Lower leg skin (tissue), 4 donors: ENCODE measurements at regions of chr4 and their contacts with region 1.

Region 1: GRCh38 chr4:73653695-73654106 is 33.5 kb upstream of the RASSF6 start:
- DNase-seq: no peak
- H3K4me3 ChIP-seq: no peak overlapping the region
- CTCF ChIP-seq: no peak
- POLR2A ChIP-seq: no peak

Region 2: GRCh38 chr4:73069338-73070073 is 584.2 kb before region 1 on chr4 and contains the start of gene COX18:
- intact Hi-C with region 1: no loop called
- DNase-seq: peak; percentile 97 to 99
- H3K4me3 ChIP-seq: peak within 1 kb of the TSS; percentile 90
- CTCF ChIP-seq: no peak
- POLR2A ChIP-seq: no peak
- total RNA-seq, gene COX18: 12.0 to 24.3 (median 21.7) TPM

Region 3: DNA sequence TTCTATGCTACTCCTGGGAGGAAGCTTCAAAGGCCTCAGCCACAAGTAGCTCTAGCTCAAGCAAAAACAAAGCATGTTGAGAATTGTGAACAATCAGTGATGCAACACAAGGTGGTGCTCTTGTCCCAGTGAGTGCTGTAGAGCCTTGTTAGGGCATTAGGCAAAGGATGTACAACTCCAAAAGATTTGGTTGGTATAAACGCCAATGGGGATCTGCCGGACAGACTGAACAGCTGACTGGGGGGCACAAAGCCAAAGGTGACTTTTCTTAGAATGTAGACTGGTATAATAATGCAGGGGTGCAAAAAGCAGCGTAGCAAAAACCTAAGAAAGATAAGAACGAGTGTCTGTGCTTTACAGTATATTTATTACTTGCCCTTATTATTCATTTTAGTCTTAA is 312.2 kb before region 1 on chr4:
- intact Hi-C with region 1: loop called (anchors 10 kb)
- DNase-seq: no peak
- H3K4me3 ChIP-seq: no peak overlapping the region
- CTCF ChIP-seq: no peak
- POLR2A ChIP-seq: no peak

Region 4: DNA sequence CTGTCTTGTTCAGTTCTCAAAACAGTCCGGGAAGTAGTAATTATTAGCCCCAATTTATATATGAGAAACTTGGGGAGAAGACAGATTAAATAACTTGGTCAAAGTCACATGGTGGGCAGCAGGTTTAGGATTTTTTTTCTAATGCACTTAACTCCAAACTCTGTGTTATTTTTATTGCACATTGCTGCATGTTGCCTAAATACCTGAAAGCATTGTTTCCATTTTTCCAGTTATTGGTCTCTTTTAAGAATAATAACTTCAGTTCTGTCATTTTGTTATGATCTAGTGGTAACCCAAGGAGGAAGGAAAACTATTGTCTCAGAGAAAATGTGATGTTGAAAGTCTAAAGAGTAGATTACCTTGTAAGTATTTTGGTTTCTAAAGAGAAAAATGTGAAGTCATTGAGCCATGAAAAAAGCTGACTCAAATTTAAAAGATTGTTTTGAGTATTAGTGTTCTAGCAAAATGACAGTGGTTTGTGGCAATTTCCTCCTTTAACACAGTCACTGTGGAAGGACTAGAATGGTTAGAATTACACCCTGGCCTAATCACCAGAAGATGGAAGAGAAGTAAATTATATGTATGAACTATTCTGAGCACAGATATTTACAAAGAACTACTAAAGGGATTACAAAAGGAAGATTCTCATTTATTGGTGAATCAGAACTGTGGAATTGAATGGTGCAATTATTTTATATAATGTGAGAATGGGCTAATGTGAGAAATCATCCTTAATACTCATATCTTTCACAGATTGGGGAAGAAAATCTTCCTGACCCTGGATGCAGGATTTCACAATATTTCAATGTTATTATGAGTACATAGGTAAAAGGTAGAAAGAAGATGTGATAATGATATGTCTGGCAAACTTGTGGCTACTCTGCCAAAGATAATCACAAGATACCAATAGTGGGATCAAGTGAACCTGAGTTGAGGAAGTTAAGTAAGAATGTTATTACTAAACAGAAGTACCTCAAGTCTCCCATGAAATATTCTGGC is 65.0 kb after region 1 on chr4:
- intact Hi-C with region 1: no loop called
- DNase-seq: no peak
- H3K4me3 ChIP-seq: no peak overlapping the region
- CTCF ChIP-seq: no peak
- POLR2A ChIP-seq: no peak